CD4-positive, alpha-beta T cell (primary cell): ENCODE measurements at regions of chr12 and their contacts with region 1.

Region 1: DNA sequence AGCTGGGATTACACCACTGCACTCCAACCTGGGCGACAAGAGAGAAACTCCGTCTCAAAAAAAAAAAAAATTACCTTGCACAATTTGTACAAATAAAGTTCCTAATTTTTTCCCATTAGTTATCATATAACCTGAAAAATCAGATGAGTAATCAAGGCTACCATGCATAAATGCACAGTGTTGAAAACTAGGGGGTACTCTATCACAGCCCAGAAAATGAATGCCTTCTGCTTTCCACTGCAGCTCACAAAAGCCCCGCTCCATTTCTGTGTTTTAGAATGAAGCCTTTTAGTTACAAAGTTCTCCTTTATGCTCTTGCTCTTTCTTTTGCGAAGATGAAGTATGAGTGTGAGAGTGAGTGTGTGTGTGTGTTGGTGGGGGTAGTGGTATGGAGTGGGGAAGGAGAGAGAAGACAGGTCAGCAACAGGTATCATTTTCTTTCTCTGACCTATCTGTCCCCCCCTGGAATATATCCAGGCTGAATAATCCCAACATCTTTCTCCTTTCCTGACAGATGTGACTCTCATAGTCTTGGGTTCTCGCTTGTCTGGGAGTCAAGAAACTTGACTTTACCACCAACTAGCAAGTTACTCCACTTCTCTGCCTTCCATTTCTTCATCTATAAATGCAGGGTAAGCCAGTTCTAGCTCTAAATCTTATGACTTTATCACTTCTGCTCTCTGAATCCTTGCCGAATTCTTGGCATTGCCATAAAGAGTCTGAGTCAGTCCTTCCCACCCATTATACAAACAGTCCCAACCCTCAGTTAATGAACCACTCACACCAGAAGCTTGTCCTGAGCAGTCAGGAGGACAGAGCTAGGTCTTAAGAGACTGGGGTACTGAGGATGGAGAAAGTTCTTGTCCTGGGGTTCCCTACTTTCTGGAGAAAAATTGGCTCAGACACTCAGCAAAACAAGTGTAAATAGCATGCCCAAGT is 16.1 kb downstream of the BIN2 start:
- DNase-seq: peak in 3 of 14 experiments; percentile 19 to 31 (median 26)
- ATAC-seq: peak; percentile 78
- H3K4me3 ChIP-seq: no peak overlapping the region
- H3K4me3 Mint-ChIP-seq: no peak overlapping the region
- H3K27ac ChIP-seq: peak overlapping the region; percentile 2 to 27
- H3K27ac Mint-ChIP-seq: peak overlapping the region; percentile 80
- H3K4me1 ChIP-seq: peaks cover 55% of the 10 kb centered on the region
- H3K4me1 Mint-ChIP-seq: peaks cover 73% of the 10 kb centered on the region
- H3K27me3 ChIP-seq: no peaks in the 10 kb centered on the region
- H3K27me3 Mint-ChIP-seq: no peaks in the 10 kb centered on the region
- CTCF ChIP-seq: peak; percentile 17

Region 2: DNA sequence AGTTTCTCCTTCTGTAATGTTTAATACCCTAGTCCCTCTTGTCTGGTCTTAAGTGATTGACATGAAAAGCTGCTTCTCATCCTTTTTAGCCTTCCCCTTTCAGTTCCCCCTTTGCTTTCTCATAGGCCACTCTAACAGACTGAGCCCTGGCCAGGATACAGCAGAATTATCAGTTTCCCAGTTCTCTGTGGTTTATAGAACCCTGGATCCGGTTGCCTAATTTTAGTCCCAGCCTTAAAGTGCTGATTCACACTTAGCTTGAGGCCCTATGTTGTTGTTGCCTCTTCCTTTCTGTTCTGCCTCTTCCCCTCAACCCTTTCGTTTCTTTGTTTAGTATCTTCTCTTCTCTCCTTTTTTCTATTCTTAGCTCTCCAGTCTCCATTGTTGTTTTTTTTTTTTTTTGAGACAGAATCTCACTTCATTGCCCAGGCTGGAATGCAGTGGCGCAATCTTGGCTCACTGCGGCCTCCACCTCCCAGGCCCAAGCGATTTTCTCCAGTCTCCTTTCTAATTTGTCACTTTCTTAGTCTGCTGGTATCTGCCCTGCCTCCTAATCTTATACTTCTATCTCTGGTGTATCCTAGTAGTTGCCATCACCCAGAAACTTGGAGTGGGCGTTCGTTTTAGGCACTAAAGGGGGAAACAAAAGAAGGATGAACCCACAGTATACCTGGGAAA is 19.0 kb after region 1 on chr12:
- CTCF ChIA-PET with region 1: interaction called, 5 read pairs
- POLR2A ChIA-PET with region 1: interaction called, 66 read pairs
- intact Hi-C with region 1: no loop called
- DNase-seq: peak in 4 of 14 experiments; percentile 12 to 67 (median 42)
- ATAC-seq: no peak
- H3K4me3 ChIP-seq: no peak overlapping the region
- H3K4me3 Mint-ChIP-seq: peak overlapping the region; percentile 62
- H3K27ac ChIP-seq: peak overlapping the region; percentile 25 to 48
- H3K27ac Mint-ChIP-seq: peak overlapping the region; percentile 87
- H3K4me1 ChIP-seq: peaks cover 73% of the 10 kb centered on the region
- H3K4me1 Mint-ChIP-seq: peaks cover 79% of the 10 kb centered on the region
- H3K27me3 ChIP-seq: no peaks in the 10 kb centered on the region
- H3K27me3 Mint-ChIP-seq: no peaks in the 10 kb centered on the region
- CTCF ChIP-seq: no peak